Astrocyte of the cerebellum (primary cell): ENCODE measurements at regions of chr11 and their contacts with region 1.

Region 1: GRCh38 chr11:19553683-19554333 is 158.8 kb upstream of the NAV2 start:
- DNase-seq: no peak
- H3K4me3 ChIP-seq: no peak overlapping the region
- CTCF ChIP-seq: peak; percentile 86

Region 2: DNA sequence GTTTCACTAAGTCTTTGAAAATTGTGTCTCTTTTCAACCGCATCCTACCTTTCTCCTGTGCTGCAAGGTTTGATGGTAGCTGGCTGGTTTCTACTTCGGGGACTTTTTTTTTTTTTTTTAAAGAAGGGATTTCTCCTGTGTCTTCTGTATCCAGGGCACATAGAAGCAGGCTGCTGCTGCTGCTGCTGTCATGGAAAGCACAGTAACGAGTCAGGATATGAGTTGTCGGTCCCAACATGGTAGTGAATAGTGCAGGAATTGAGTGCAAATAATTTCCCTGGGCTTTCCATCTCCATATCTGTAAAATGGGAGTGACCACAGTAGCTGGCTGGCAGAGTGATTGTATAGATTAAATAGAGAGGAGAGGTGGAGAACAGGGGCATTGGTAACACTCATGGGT is 40.5 kb after region 1 on chr11:
- in situ Hi-C with region 1: no loop called
- DNase-seq: no peak
- H3K4me3 ChIP-seq: no peak overlapping the region
- CTCF ChIP-seq: no peak

Region 3: GRCh38 chr11:19614370-19614940 is 60.6 kb after region 1 on chr11:
- in situ Hi-C with region 1: no loop called
- DNase-seq: no peak
- H3K4me3 ChIP-seq: no peak overlapping the region
- CTCF ChIP-seq: no peak

Region 4: GRCh38 chr11:19628018-19628417 is 74.2 kb after region 1 on chr11:
- in situ Hi-C with region 1: no loop called
- DNase-seq: no peak
- H3K4me3 ChIP-seq: no peak overlapping the region
- CTCF ChIP-seq: no peak

Region 5: GRCh38 chr11:19890308-19890707 is 336.5 kb after region 1 on chr11:
- in situ Hi-C with region 1: loop called (anchors 25 kb)
- DNase-seq: peak; percentile 96
- H3K4me3 ChIP-seq: no peak overlapping the region
- CTCF ChIP-seq: no peak

Region 6: DNA sequence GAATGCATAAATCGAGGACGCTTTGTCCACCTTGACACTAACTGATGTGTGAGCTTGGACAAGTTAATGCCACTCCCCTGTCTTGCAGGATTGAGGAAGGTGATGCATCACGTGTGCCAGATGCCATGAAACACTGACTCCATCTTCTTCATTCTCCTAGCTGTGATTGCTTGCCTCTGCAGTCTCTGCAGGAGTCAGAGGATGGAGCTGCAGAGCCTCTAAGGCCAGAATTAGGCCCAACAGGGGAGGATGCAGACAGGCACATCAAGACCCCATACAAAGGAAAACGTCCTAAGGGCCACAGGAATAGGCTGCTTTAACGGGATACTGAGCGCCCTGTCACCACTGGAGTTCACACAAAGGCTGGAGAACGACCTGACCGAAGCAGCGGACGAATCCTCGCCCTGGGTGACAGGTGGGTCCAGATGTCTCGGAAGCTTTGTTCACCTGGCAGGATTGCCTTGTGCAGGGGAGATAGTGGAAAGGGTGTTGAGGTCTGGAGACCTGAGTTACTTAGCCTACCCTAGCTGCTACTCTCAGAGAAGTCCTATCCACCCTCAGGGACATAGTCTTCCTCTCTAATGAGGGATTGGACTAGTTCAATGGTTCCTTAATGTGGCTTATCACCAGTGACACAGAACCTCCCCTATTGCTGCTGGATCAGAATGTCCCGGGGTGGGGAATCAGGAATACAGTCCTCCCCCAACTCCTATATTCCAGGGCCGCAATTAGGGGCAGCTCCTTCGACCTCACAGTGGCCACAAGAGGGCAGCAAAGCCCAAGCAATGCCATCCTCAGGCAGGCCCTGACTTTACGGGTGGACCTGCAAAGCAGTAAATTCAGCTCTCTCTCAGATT is 574.1 kb after region 1 on chr11:
- in situ Hi-C with region 1: loop called (anchors 25 kb)
- DNase-seq: peak; percentile 48
- H3K4me3 ChIP-seq: no peak overlapping the region
- CTCF ChIP-seq: peak; percentile 84